Heart left ventricle (tissue), 16 donors: ENCODE measurements at regions of chr3 and their contacts with region 1.

Region 1: GRCh38 chr3:58008140-58009025 is at the start of gene FLNB:
- DNase-seq: peak; percentile 67 to 89 (median 71)
- ATAC-seq: peak; percentile 75 to 92 (median 88)
- H3K4me3 ChIP-seq: peak within 1 kb of the TSS; percentile 67 to 98 (median 93)
- H3K27ac ChIP-seq: peak within 1 kb of the TSS; percentile 49 to 91 (median 82)
- H3K4me1 ChIP-seq: peaks cover 0 to 54% (median 28%) of the 10 kb centered on the region in 12 donors
- H3K27me3 ChIP-seq: no peaks in the 10 kb centered on the region
- CTCF ChIP-seq: peak; percentile 54 to 94 (median 69)
- POLR2A ChIP-seq: peak in 1 of 2 donors; percentile 76
- total RNA-seq, gene FLNB: 30.5 to 75.6 (median 40.6) TPM

Region 2: GRCh38 chr3:57951066-57951882 is 57.1 kb before region 1 on chr3:
- intact Hi-C with region 1: loop called in 1 of 10 experiments (anchors 5 kb)
- DNase-seq: peak; percentile 74 to 91 (median 82)
- ATAC-seq: peak; percentile 92 to 95 (median 94)
- H3K4me3 ChIP-seq: peak overlapping the region in 1 of 12 donors; percentile 8
- H3K27ac ChIP-seq: peak overlapping the region; percentile 82 to 97 (median 92)
- H3K4me1 ChIP-seq: peaks cover 8 to 48% (median 32%) of the 10 kb centered on the region in 12 donors
- H3K27me3 ChIP-seq: no peaks in the 10 kb centered on the region
- CTCF ChIP-seq: no peak
- POLR2A ChIP-seq: peak in 1 of 2 donors; percentile 21

Region 3: DNA sequence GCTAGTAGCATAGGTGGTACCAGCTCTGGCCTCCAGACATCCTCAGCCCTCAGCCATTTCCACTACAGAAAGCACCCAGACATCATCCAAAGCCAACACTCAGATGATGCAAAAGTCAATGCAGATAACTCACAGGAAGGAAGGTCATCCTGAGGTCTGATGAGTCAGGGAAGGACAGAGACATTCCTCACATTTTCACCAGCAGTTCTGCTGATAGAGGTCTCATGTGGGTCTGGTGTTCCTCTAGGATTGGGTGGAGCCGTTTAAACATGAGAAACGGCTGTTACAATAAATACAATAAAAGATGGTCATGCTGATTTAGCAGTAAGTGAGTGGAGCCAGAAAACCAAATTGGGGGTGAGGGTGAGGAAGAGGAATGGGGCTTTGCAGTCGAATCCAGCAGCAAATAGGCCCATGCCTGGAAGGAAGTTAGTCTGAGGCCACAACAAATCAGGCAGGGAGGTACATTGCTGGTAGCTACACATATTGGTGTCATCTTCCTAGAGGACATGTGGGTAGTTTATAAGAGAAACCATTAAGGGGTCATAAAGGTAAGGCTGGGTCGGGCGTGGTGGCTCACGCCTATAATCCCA is 33.5 kb before region 1 on chr3:
- intact Hi-C with region 1: no loop called
- DNase-seq: peak in 1 of 5 donors; percentile 48
- ATAC-seq: peak in 3 of 4 donors; percentile 59 to 84 (median 71)
- H3K4me3 ChIP-seq: no peak overlapping the region
- H3K27ac ChIP-seq: peak overlapping the region in 7 of 12 donors; percentile 11 to 70 (median 24)
- H3K4me1 ChIP-seq: peaks cover 0 to 50% (median 18%) of the 10 kb centered on the region in 12 donors
- H3K27me3 ChIP-seq: no peaks in the 10 kb centered on the region
- CTCF ChIP-seq: no peak
- POLR2A ChIP-seq: no peak

Region 4: DNA sequence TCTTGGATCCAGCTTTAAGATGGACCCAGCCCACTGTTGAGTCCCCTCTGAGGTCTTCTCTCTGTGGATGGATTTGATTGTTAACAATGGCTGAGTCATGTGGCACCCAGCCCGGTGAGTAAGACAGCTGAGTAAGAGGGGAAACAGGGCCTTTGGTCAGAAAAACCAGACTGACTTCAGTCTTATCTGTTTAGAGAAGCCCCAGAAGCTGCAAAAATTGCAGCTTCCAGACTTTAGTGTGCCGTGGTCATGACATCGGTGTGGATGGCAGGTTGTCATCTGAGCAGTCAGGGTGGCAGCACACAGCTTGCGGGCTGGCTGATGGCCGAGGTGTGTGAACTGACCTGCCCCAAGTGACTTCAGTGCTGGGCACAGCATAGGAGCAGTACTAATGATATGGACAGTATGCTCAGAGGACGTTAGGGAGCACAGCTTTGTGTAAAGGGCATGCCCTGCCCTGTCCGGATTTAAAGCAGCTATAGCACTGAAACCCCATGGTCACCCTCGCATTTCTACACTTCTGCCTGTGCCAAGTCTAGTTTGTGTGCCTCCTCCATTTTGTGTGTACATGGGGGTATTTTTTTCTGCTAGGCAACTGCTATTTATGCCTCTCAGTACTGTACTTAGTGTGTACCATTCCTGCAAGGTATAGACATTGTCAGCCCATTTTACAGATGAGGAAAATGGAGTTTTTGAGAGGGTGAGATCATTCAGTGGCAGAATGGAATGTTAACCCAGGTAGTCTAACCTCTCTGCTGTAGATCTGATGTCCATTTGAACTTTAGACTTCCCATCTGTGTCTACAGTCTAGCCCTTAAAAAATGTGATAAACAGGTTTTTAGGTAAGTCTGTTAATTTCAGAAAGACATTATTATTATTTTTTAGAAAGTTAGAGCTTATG is 44.2 kb after region 1 on chr3:
- intact Hi-C with region 1: loop called in 3 of 10 experiments (anchors 5 kb)
- DNase-seq: peak; percentile 65 to 88 (median 83)
- ATAC-seq: peak; percentile 35 to 75 (median 66)
- H3K4me3 ChIP-seq: no peak overlapping the region
- H3K27ac ChIP-seq: peak overlapping the region; percentile 14 to 82 (median 65)
- H3K4me1 ChIP-seq: peaks cover 0 to 68% (median 48%) of the 10 kb centered on the region in 12 donors
- H3K27me3 ChIP-seq: no peaks in the 10 kb centered on the region
- CTCF ChIP-seq: no peak
- POLR2A ChIP-seq: no peak

Region 5: GRCh38 chr3:58116161-58116955 is 108.0 kb after region 1 on chr3:
- intact Hi-C with region 1: loop called in 4 of 10 experiments (anchors 5 to 10 kb)
- DNase-seq: no peak
- ATAC-seq: no peak
- H3K4me3 ChIP-seq: no peak overlapping the region
- H3K27ac ChIP-seq: peak overlapping the region in 4 of 12 donors; percentile 2 to 61 (median 41)
- H3K4me1 ChIP-seq: peaks cover 0 to 50% (median 29%) of the 10 kb centered on the region in 12 donors
- H3K27me3 ChIP-seq: no peaks in the 10 kb centered on the region
- CTCF ChIP-seq: no peak
- POLR2A ChIP-seq: no peak

Region 6: DNA sequence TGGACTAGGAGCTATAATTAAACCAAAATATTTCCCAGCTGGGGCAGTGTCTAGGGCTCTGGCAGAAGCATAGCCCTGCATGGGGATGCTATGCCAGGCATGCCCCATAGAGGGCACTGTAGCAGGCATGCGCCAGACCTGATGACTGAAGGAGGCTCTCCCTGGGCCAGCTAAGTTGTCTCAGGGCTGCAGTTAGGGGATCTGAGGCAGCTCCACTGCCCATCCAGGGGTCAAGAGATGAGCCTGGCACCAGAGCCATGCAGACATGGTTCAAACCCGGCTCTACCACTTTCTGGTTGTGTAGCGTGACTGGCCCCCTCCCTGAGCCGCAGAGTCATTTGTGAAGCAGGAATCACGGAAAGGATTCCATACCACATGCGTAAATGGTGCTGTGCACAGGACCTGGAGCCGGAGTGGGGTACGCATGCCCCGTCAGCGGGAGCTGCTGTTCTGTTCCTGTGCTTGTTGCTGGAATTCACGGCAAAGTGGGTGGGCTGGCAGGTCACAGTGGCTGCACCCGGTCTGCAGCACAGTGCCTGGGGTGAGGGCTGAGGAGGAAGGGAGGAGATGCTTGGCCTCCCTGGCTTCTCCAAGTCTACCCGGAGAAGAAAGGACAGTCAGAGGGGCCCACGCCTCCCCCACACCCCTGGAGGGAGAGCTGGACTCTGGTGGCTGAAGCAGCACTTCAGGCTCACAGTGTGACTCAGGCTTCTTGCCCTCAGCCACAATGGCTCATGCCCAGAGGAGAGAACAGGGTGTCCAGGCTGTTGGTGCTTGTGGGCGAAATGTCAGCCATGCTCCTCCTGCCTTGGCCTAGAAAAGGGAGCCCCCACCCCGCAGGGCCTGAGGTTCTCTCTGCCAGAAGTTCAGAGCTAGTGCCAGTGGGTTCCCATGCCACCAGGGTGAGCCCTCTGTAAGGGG is 159.3 kb after region 1 on chr3:
- intact Hi-C with region 1: loop called in 4 of 10 experiments (anchors 2 to 10 kb)
- DNase-seq: peak; percentile 71 to 83 (median 78)
- ATAC-seq: peak; percentile 75 to 82 (median 78)
- H3K4me3 ChIP-seq: no peak overlapping the region
- H3K27ac ChIP-seq: peak overlapping the region in 11 of 12 donors; percentile 61 to 93 (median 85)
- H3K4me1 ChIP-seq: peaks cover 0 to 55% (median 32%) of the 10 kb centered on the region in 12 donors
- H3K27me3 ChIP-seq: no peaks in the 10 kb centered on the region
- CTCF ChIP-seq: peak; percentile 79 to 94 (median 88)
- POLR2A ChIP-seq: no peak

Region 7: DNA sequence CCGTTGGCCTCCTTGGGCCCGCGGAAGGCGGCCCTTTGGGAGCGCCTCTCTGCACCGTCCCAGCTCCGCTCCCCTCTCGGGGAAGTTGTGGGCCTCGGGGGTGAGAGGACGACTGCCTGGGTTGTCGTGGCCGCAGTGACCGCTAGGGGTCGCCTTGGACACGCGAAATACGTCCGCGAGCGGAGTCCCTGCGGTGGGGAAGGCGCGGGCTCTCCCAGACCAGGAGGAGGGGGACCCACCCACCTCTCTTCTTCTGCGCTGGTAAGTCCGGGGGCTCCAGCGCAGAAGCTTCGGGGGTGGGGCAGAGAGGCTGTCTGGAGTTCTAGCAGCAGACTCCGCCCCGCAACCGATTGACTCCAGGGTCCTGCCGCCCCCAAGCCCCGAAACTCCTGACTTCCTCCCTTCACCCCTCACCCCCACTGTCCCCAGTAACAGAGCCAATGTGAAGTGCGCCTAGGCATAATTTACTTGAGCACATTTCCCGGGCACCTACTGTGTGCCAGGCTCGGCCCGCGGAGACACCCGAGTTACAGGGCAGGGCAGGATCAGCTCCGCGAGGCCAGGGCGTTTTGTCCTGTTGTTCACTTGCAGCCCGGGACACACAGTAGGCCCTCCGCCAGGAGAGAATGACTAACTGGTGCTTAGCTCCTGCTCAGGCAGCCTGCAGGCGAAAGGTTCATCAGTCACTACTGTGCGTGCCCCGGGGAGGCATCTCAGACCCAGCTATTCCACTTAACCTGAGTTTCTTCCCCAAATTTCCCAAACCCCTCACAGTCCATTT is 169.6 kb after region 1 on chr3:
- intact Hi-C with region 1: loop called in 9 of 10 experiments (anchors 2 to 10 kb)
- DNase-seq: peak; percentile 89 to 94 (median 91)
- ATAC-seq: peak; percentile 57 to 84 (median 79)
- H3K4me3 ChIP-seq: peak overlapping the region in 10 of 12 donors; percentile 42 to 69 (median 52)
- H3K27ac ChIP-seq: peak overlapping the region in 1 of 12 donors; percentile 1
- H3K4me1 ChIP-seq: peaks cover 0 to 51% (median 30%) of the 10 kb centered on the region in 12 donors
- H3K27me3 ChIP-seq: no peaks in the 10 kb centered on the region
- CTCF ChIP-seq: peak; percentile 90 to 98 (median 93)
- POLR2A ChIP-seq: no peak

Region 8: DNA sequence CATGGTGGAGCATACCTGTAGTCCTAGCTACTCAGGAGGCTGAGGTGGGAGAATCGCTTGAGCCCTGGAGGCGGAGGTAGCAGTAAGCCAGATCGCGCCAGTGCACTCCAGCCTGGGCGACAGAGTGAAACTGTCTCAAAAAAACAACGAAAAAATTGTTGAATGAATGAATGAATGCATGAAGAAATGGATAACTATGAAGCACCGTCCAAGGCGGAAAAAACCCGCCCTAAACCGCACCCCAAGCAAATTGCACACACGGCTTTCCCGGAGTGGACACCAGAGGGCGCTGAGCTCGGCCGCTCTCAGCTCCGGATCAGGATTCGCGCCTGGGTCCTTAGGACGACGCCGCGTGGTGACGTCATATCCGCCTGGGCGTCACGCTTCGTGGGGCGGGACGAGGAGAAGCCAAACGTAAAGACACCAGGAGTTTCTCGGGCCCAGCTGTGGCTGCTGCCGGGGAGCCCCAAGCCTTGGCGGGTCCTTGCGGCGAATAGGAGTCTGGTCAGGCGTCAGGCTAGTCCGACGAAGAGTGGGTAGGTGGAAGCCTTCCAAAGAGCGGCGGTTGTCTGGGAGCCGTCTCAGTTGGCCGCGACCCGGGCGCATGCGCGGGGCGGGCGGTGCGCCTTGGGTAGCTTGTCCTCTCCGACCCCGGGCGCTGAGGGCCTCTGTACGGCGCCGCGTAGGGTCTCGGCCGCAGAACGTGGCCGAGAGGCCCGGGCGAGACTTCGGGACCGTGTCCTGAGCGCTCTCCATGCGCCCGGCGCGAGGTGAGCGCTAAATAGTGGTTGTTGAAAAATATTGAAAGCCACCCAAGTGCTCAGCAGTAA is 297.7 kb after region 1 on chr3 and contains the starts of genes HTD2 and RPP14:
- intact Hi-C with region 1: loop called in 2 of 10 experiments (anchors 10 kb)
- DNase-seq: peak; percentile 98 to 100 (median 99)
- ATAC-seq: peak; percentile 94 to 97 (median 96)
- H3K4me3 ChIP-seq: peak within 1 kb of the TSS; percentile 80 to 97 (median 86)
- H3K27ac ChIP-seq: peak within 1 kb of the TSS; percentile 90 to 99 (median 96)
- H3K4me1 ChIP-seq: peaks cover 5 to 36% (median 26%) of the 10 kb centered on the region in 12 donors
- H3K27me3 ChIP-seq: peaks cover 0 to 5% (median 0%) of the 10 kb centered on the region in 9 donors
- CTCF ChIP-seq: peak; percentile 95 to 99 (median 96)
- POLR2A ChIP-seq: peak in 1 of 2 donors; percentile 76
- total RNA-seq, gene HTD2: 5.7 to 21.6 (median 12.4) TPM
- total RNA-seq, gene RPP14: 9.6 to 32.4 (median 24.0) TPM